ENCODE measurements at regions of chr17 and their contacts with region 1.

Region 1: GRCh38 chr17:19513897-19514488 is 19.7 kb upstream of the SLC47A1 start:
- DNase-seq: peak in 1 of 2 donors; percentile 76
- ATAC-seq: peak; percentile 87

Region 2: GRCh38 chr17:19418251-19418992 is 95.6 kb before region 1 on chr17:
- intact Hi-C with region 1: no loop called
- DNase-seq: no peak
- ATAC-seq: no peak

Region 3: GRCh38 chr17:19648475-19649406 is 134.7 kb after region 1 on chr17 and contains the start of gene ALDH3A2:
- intact Hi-C with region 1: loop called in 1 of 2 experiments (anchors 5 kb)
- DNase-seq: peak; percentile 97 to 98
- ATAC-seq: peak; percentile 94
- total RNA-seq, gene ALDH3A2: 105 to 114 TPM

Region 4: GRCh38 chr17:19706791-19707727 is 193.1 kb after region 1 on chr17:
- intact Hi-C with region 1: no loop called
- DNase-seq: no peak
- ATAC-seq: peak; percentile 7